Panc1 (cell line): ENCODE measurements at regions of chr17 and their contacts with region 1.

Region 1: DNA sequence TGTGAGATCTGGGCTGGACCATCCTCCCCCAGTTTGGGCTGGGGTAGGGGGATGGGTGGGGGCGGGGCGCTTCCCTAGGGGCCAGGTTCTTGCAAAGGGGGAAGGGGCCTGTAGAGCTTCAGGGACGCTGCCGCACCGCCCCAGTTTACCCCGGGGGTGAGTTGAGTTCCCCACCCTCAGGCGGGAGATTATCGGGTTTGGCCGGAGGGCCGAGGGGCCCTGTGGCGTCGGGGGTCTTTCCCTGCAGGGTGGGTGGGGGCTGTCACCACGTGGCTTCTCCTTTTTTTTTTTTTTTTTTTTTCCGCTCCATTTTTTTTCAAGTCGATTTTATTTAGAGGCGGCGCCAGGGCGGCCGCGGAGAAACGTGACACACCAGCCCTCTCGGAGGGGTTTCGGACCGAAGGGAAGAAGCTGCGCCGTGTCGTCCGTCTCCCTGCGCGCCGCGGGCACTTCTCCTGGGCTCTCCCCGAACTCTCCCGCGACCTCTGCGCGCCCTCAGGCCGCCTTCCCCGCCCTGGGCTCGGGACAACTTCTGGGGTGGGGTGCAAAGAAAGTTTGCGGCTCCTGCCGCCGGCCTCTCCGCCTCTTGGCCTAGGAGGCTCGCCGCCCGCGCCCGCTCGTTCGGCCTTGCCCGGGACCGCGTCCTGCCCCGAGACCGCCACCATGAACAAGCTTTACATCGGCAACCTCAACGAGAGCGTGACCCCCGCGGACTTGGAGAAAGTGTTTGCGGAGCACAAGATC is at the start of gene IGF2BP1:
- DNase-seq: no peak
- ATAC-seq: peak; percentile 39
- H3K4me3 ChIP-seq: peak within 1 kb of the TSS; percentile 70 to 80
- H3K27ac ChIP-seq: peak within 1 kb of the TSS; percentile 97
- H3K4me1 ChIP-seq: peaks cover 59% of the 10 kb centered on the region
- H3K27me3 ChIP-seq: no peaks in the 10 kb centered on the region; the same call in 1 of the 2 replicates
- CTCF ChIP-seq: no peak
- total RNA-seq, gene IGF2BP1: 109 TPM

Region 2: DNA sequence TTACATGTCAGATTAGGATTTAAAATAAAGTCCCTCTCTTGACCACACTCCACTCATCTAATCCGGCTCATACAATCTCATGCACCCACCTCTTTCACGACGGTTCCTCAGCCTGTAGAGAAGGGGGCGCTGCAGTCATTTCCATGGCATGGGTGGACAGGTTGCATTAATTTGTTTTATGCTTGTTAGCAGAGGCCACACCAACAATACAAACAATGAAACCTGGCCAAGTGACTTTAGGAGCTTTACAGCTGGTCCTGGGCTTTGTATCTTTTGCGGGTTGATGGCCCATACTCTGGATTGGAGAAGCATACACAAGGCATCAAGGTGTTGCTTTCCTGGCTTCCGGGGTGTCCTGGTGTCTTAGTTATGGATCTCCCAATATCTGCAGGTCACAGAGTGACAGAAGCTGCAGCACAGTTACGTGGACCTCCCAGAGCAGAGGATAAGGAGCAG is 42.9 kb before region 1 on chr17:
- CTCF ChIA-PET with region 1: interaction called, 10 read pairs
- POLR2A ChIA-PET with region 1: interaction called, 12 read pairs
- in situ Hi-C with region 1: no loop called
- intact Hi-C with region 1: loop called (anchors 5 kb)
- DNase-seq: no peak
- ATAC-seq: peak; percentile 93
- H3K4me3 ChIP-seq: no peak overlapping the region
- H3K27ac ChIP-seq: no peak overlapping the region
- H3K4me1 ChIP-seq: peaks cover 13% of the 10 kb centered on the region
- H3K27me3 ChIP-seq: no peaks in the 10 kb centered on the region
- CTCF ChIP-seq: peak; percentile 95

Region 3: DNA sequence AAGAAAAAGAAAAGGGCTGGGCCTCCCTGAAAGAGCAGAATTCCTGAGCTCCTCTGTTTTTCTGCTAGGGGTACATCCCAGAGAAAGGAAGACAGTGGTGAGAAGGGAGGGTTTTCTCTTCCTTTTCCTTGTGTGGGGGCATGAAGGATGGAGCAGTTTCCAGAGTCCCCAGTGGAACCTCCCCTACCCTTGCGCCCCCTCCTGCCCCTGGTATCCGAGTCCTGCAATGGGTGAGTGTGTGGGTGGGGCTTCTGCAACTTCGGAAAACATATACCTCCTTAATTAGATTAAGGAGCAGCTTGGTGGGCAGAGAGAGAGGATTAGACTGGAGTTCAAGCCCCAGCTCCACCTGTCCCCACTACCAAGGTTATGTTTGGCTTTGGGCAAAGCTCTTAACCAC is 23.4 kb before region 1 on chr17:
- CTCF ChIA-PET with region 1: interaction called, 4 read pairs
- POLR2A ChIA-PET with region 1: interaction called, 25 read pairs
- in situ Hi-C with region 1: no loop called
- intact Hi-C with region 1: no loop called
- DNase-seq: no peak
- ATAC-seq: no peak
- H3K4me3 ChIP-seq: no peak overlapping the region
- H3K27ac ChIP-seq: peak overlapping the region; percentile 81; the same call in 1 of the 2 replicates
- H3K4me1 ChIP-seq: peaks cover 37% of the 10 kb centered on the region
- H3K27me3 ChIP-seq: no peaks in the 10 kb centered on the region
- CTCF ChIP-seq: no peak

Region 4: GRCh38 chr17:49015924-49016787 is 18.9 kb after region 1 on chr17:
- CTCF ChIA-PET with region 1: no interaction called
- POLR2A ChIA-PET with region 1: interaction called, 12 read pairs
- in situ Hi-C with region 1: no loop called
- intact Hi-C with region 1: no loop called
- DNase-seq: no peak
- ATAC-seq: peak; percentile 52
- H3K4me3 ChIP-seq: no peak overlapping the region
- H3K27ac ChIP-seq: no peak overlapping the region
- H3K4me1 ChIP-seq: peaks cover 28% of the 10 kb centered on the region
- H3K27me3 ChIP-seq: no peaks in the 10 kb centered on the region
- CTCF ChIP-seq: no peak

Region 5: GRCh38 chr17:49836111-49837030 is 839.1 kb after region 1 on chr17:
- CTCF ChIA-PET with region 1: no interaction called
- POLR2A ChIA-PET with region 1: interaction called, 14 read pairs
- in situ Hi-C with region 1: no loop called
- intact Hi-C with region 1: no loop called
- DNase-seq: no peak
- ATAC-seq: peak; percentile 55
- H3K4me3 ChIP-seq: no peak overlapping the region
- H3K27ac ChIP-seq: no peak overlapping the region
- H3K4me1 ChIP-seq: peaks cover 14% of the 10 kb centered on the region
- H3K27me3 ChIP-seq: no peaks in the 10 kb centered on the region
- CTCF ChIP-seq: no peak

Region 6: GRCh38 chr17:50094753-50095619 is 1097.7 kb after region 1 on chr17 and contains the start of gene PDK2:
- CTCF ChIA-PET with region 1: no interaction called
- POLR2A ChIA-PET with region 1: interaction called, 11 read pairs
- in situ Hi-C with region 1: no loop called
- intact Hi-C with region 1: no loop called
- DNase-seq: no peak
- ATAC-seq: peak; percentile 89
- H3K4me3 ChIP-seq: peak within 1 kb of the TSS; percentile 73 to 75
- H3K27ac ChIP-seq: peak within 1 kb of the TSS; percentile 86
- H3K4me1 ChIP-seq: peaks cover 32% of the 10 kb centered on the region
- H3K27me3 ChIP-seq: no peaks in the 10 kb centered on the region
- CTCF ChIP-seq: no peak
- total RNA-seq, gene PDK2: 46.0 TPM